ENCODE measurements at regions of chr2 and their contacts with region 1.

Region 1: DNA sequence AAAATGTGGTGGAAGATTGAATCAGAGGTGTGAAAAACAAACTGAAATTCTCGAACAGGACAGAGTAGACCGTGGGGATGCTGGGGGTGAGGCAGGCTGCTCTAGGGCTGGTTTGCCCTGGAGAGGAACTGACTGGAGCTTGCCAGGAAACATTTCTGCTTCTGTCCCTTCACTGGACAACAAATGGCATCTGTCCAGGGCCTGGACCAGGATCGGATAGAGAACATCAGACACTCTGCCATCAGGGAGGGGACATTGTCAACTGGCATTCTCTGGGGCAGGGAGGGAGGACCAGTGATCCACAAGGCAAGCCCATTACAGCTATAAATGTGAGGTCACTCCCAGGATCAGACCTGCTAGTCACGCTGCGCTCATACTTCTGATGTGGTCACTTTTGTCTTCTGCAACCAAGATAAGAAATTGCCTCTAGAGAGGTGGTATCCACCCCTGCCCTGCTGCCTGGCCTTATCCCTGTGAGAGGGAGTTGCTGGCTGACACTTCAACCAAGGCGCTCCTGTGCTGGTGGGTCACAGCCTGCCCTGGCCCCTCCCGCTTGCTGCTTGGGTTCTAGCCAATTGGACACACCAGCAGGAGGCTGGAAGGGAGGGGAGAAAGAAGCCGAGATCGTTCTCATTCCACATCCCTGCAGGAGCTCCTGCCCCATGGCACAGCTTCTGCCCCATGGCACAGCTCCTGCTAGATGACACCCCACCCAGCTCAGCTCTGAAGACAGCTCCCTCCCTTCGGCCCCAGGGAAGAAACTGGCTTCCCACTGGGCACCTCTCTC is 8.7 kb downstream of the NPPC start:
- DNase-seq: peak in 1 of 4 donors; percentile 29
- ATAC-seq: no peak
- H3K4me3 ChIP-seq: no peak overlapping the region
- H3K27ac ChIP-seq: no peak overlapping the region
- H3K4me1 ChIP-seq: no peaks in the 10 kb centered on the region
- H3K27me3 ChIP-seq: peaks cover 0 to 18% of the 10 kb centered on the region in 2 donors
- CTCF ChIP-seq: no peak

Region 2: DNA sequence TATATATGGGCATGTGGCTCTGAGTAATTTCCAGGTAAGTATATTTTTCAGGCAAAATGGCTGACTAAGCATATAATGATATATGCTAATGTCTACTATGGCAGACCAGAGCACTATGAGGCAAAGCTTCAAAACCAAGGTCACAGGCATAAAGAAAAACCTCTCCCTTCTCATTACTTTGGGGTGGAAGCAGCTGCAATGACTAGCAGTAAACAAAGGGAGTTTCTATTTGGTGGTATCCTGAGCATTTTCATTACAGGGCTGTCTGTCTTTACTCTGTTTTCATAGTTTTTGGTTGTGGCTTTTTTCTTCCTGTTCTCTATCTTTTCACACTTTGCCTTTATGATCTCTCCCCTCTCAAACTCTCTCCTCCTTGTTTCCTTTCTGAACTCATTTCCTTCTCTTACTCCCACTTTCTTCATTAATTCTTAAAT is 152.0 kb before region 1 on chr2:
- intact Hi-C with region 1: no loop called
- DNase-seq: no peak
- ATAC-seq: no peak
- H3K4me3 ChIP-seq: no peak overlapping the region
- H3K27ac ChIP-seq: no peak overlapping the region
- H3K4me1 ChIP-seq: no peaks in the 10 kb centered on the region
- H3K27me3 ChIP-seq: no peaks in the 10 kb centered on the region
- CTCF ChIP-seq: no peak

Region 3: GRCh38 chr2:232438951-232439757 is 521.7 kb after region 1 on chr2:
- intact Hi-C with region 1: loop called in 1 of 2 experiments (anchors 10 kb)
- DNase-seq: peak in 2 of 4 donors; percentile 19 to 56
- ATAC-seq: peak; percentile 79
- H3K4me3 ChIP-seq: no peak overlapping the region
- H3K27ac ChIP-seq: no peak overlapping the region
- H3K4me1 ChIP-seq: peaks cover 0 to 4% of the 10 kb centered on the region in 2 donors
- H3K27me3 ChIP-seq: peaks cover 0 to 10% of the 10 kb centered on the region in 2 donors
- CTCF ChIP-seq: peak; percentile 46 to 74

Measured in left lung (tissue), 14 donors.